Naive thymus-derived CD4-positive, alpha-beta T cell (primary cell): ENCODE measurements at regions of chr6 and their contacts with region 1.

Region 1: DNA sequence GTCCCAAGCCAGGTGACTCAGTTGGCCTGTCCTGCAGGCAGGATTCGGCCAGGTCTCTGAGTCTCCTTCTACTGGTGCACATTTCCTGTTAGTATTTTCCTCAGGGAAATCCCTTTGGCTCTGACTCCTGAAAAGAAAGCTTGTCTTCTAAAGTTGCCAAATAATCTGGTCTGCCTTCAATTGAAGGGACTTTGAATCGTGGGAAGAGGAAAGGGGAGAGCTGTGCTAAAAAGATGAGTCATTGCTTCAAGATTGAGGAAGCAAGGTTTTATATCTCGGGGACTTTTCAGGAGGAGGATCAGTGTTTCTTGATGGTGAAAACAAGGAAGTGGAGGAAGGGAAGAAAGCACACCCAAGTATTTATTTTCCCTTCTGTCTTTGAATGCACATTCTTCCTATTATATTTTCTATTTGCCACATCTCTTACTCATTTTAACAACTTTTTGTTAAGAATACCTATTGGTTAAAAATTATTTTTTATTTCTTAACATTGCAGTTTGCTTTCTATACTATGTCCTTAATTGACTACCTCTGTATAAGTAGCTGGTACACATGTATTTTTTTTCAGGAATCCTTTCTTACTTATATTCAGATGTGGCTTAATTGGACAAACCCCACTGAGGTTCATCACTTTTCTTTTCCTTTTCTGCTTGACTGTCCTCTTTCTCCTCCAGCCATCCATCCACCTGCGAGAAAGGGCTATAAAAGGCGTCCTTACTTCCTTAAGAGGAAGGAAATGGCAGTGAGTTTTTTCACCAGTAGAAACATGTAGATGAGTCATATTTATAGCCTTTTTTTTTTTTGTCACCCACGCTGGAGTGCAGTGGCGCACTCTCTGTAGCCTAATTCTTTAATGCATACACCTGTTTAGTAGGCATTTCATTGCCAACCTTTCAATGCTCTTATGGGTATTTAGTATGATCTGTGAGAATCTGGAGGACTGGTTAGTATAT is 15.0 kb upstream of the IFNGR1 start:
- DNase-seq: peak in 4 of 9 donors; percentile 14 to 40 (median 32)
- ATAC-seq: peak; percentile 72
- H3K4me3 ChIP-seq: no peak overlapping the region
- H3K4me3 Mint-ChIP-seq: peak overlapping the region in 9 of 10 donors; percentile 9 to 65 (median 46)
- H3K27ac ChIP-seq: no peak overlapping the region
- H3K27ac Mint-ChIP-seq: peak overlapping the region in 7 of 9 donors; percentile 3 to 51 (median 32)
- H3K4me1 ChIP-seq: peaks cover 37 to 51% of the 10 kb centered on the region in 2 donors
- H3K4me1 Mint-ChIP-seq: peaks cover 30 to 60% (median 51%) of the 10 kb centered on the region in 7 donors
- H3K27me3 ChIP-seq: no peaks in the 10 kb centered on the region
- H3K27me3 Mint-ChIP-seq: peaks cover 0 to 11% (median 0%) of the 10 kb centered on the region in 5 donors

Region 2: DNA sequence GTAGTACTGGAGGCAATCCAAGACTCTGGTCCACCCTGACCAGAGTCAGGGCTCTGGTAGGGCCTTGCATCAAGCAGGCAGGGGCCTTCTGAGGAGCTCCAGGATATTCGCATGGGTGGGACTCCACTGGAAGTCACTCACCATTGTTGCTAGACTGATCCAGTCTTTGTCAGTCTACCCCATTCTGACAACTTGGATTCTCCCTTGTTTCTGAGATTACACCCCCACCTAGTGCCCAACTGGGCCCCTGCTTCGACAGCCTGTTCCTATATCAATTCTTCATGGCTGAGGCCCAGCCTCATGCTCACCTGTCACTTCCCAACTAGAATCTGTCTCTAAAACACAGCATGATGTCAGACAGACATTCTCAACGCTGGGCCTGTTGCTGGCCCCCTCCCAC is 306.9 kb before region 1 on chr6:
- CTCF ChIA-PET with region 1: no interaction called
- POLR2A ChIA-PET with region 1: no interaction called
- intact Hi-C with region 1: no loop called
- DNase-seq: peak in 2 of 9 donors; percentile 10 to 18
- ATAC-seq: peak; percentile 38
- H3K4me3 ChIP-seq: no peak overlapping the region
- H3K4me3 Mint-ChIP-seq: no peak overlapping the region
- H3K27ac ChIP-seq: no peak overlapping the region
- H3K27ac Mint-ChIP-seq: no peak overlapping the region
- H3K4me1 ChIP-seq: peaks cover 0 to 4% of the 10 kb centered on the region in 2 donors
- H3K4me1 Mint-ChIP-seq: peaks cover 0 to 12% (median 6%) of the 10 kb centered on the region in 7 donors
- H3K27me3 ChIP-seq: no peaks in the 10 kb centered on the region
- H3K27me3 Mint-ChIP-seq: peaks cover 36 to 65% (median 46%) of the 10 kb centered on the region in 5 donors

Region 3: GRCh38 chr6:137155830-137156229 is 78.4 kb before region 1 on chr6:
- CTCF ChIA-PET with region 1: no interaction called
- POLR2A ChIA-PET with region 1: no interaction called
- intact Hi-C with region 1: loop called in 1 of 2 experiments (anchors 2 kb)
- DNase-seq: peak in 8 of 9 donors; percentile 11 to 53 (median 26)
- ATAC-seq: peak; percentile 90
- H3K4me3 ChIP-seq: no peak overlapping the region
- H3K4me3 Mint-ChIP-seq: peak overlapping the region in 8 of 10 donors; percentile 4 to 71 (median 31)
- H3K27ac ChIP-seq: no peak overlapping the region
- H3K27ac Mint-ChIP-seq: peak overlapping the region in 3 of 9 donors; percentile 63 to 88 (median 63)
- H3K4me1 ChIP-seq: peaks cover 8 to 13% of the 10 kb centered on the region in 2 donors
- H3K4me1 Mint-ChIP-seq: peaks cover 12 to 37% (median 15%) of the 10 kb centered on the region in 7 donors
- H3K27me3 ChIP-seq: no peaks in the 10 kb centered on the region
- H3K27me3 Mint-ChIP-seq: peaks cover 4 to 30% (median 9%) of the 10 kb centered on the region in 5 donors

Region 4: GRCh38 chr6:137873273-137873762 is 639.1 kb after region 1 on chr6:
- CTCF ChIA-PET with region 1: no interaction called
- POLR2A ChIA-PET with region 1: no interaction called
- intact Hi-C with region 1: loop called in 1 of 2 experiments (anchors 10 kb)
- DNase-seq: peak in 6 of 9 donors; percentile 12 to 81 (median 37)
- ATAC-seq: peak; percentile 54
- H3K4me3 ChIP-seq: peak overlapping the region; percentile 0
- H3K4me3 Mint-ChIP-seq: peak overlapping the region; percentile 60 to 98 (median 94)
- H3K27ac ChIP-seq: peak overlapping the region; percentile 99
- H3K27ac Mint-ChIP-seq: peak overlapping the region; percentile 61 to 99 (median 94)
- H3K4me1 ChIP-seq: peaks cover 38 to 49% of the 10 kb centered on the region in 2 donors
- H3K4me1 Mint-ChIP-seq: peaks cover 53 to 91% (median 78%) of the 10 kb centered on the region in 7 donors
- H3K27me3 ChIP-seq: no peaks in the 10 kb centered on the region
- H3K27me3 Mint-ChIP-seq: no peaks in the 10 kb centered on the region